B cell (primary cell): ENCODE measurements at regions of chrX and their contacts with region 1.

Region 1: GRCh38 chrX:10111364-10112148 is 45.2 kb upstream of the CLCN4 start:
- DNase-seq: peak; percentile 88
- ATAC-seq: peak; percentile 70
- H3K4me3 ChIP-seq: peak overlapping the region in 4 of 5 experiments; percentile 16 to 43 (median 28)
- H3K4me3 Mint-ChIP-seq: peak overlapping the region; percentile 92
- H3K27ac ChIP-seq: peak overlapping the region; percentile 81 to 98
- H3K27ac Mint-ChIP-seq: peak overlapping the region; percentile 100
- H3K4me1 ChIP-seq: peaks cover 79 to 97% of the 10 kb centered on the region in 2 donors
- H3K4me1 Mint-ChIP-seq: peaks cover 77% of the 10 kb centered on the region
- H3K27me3 ChIP-seq: no peaks in the 10 kb centered on the region
- H3K27me3 Mint-ChIP-seq: no peaks in the 10 kb centered on the region
- CTCF ChIP-seq: no peak

Region 2: GRCh38 chrX:10007621-10008020 is 103.9 kb before region 1 on chrX:
- CTCF ChIA-PET with region 1: interaction called, 18 read pairs
- POLR2A ChIA-PET with region 1: interaction called, 18 read pairs
- intact Hi-C with region 1: no loop called
- DNase-seq: no peak
- ATAC-seq: no peak
- H3K4me3 ChIP-seq: no peak overlapping the region
- H3K4me3 Mint-ChIP-seq: no peak overlapping the region
- H3K27ac ChIP-seq: no peak overlapping the region
- H3K27ac Mint-ChIP-seq: no peak overlapping the region
- H3K4me1 ChIP-seq: peaks cover 21 to 25% of the 10 kb centered on the region in 2 donors
- H3K4me1 Mint-ChIP-seq: peaks cover 30% of the 10 kb centered on the region
- H3K27me3 ChIP-seq: no peaks in the 10 kb centered on the region
- H3K27me3 Mint-ChIP-seq: no peaks in the 10 kb centered on the region
- CTCF ChIP-seq: no peak

Region 3: GRCh38 chrX:10062352-10062751 is 49.2 kb before region 1 on chrX:
- CTCF ChIA-PET with region 1: interaction called, 6 read pairs
- POLR2A ChIA-PET with region 1: no interaction called
- intact Hi-C with region 1: loop called (anchors 5 kb)
- DNase-seq: peak; percentile 15
- ATAC-seq: peak; percentile 51
- H3K4me3 ChIP-seq: no peak overlapping the region
- H3K4me3 Mint-ChIP-seq: peak overlapping the region; percentile 69
- H3K27ac ChIP-seq: no peak overlapping the region
- H3K27ac Mint-ChIP-seq: peak overlapping the region; percentile 80
- H3K4me1 ChIP-seq: peaks cover 6 to 21% of the 10 kb centered on the region in 2 donors
- H3K4me1 Mint-ChIP-seq: peaks cover 47% of the 10 kb centered on the region
- H3K27me3 ChIP-seq: no peaks in the 10 kb centered on the region
- H3K27me3 Mint-ChIP-seq: no peaks in the 10 kb centered on the region
- CTCF ChIP-seq: no peak

Region 4: DNA sequence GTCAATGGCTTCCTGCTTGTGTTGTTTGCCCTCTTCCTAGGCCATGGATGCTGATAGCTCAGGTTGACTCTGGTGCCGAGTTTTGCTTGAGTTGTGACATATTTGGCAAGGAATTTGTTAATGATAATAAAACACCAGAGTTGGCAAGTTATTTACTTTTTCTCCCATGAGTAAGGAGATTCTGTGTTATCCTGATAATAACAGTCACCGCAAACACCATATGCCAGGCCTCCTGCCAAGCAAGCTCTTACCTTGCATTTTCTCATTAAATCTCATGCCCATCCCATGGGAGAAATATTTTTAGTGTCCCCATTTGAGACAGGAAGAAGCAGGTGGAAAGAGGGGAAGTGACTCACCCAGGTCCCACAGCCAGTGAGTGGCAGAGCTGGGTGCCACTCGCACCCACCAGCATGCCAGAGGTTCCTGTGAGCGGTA is 22.2 kb before region 1 on chrX:
- CTCF ChIA-PET with region 1: interaction called, 47 read pairs
- POLR2A ChIA-PET with region 1: interaction called, 13 read pairs
- intact Hi-C with region 1: no loop called
- DNase-seq: no peak
- ATAC-seq: no peak
- H3K4me3 ChIP-seq: no peak overlapping the region
- H3K4me3 Mint-ChIP-seq: no peak overlapping the region
- H3K27ac ChIP-seq: no peak overlapping the region
- H3K27ac Mint-ChIP-seq: peak overlapping the region; percentile 61
- H3K4me1 ChIP-seq: peaks cover 21 to 29% of the 10 kb centered on the region in 2 donors
- H3K4me1 Mint-ChIP-seq: peaks cover 47% of the 10 kb centered on the region
- H3K27me3 ChIP-seq: no peaks in the 10 kb centered on the region
- H3K27me3 Mint-ChIP-seq: no peaks in the 10 kb centered on the region
- CTCF ChIP-seq: no peak

Region 5: DNA sequence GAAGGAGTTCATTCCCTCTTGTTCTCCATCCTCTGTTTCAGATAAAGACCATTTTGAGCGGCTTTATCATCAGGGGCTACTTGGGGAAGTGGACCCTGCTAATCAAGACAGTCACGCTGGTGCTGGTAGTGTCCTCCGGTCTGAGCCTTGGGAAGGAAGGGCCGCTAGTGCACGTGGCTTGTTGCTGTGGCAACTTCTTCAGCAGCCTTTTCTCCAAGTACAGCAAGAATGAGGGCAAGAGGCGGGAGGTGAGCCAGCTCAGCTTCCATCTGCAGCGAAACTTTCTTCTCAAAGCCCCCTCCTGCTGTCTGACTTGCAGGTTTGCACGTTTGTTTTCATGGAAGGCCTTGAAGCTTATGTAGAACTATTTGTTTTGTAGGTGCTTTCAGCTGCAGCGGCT is 94.8 kb after region 1 on chrX:
- CTCF ChIA-PET with region 1: no interaction called
- POLR2A ChIA-PET with region 1: no interaction called
- intact Hi-C with region 1: no loop called
- DNase-seq: no peak
- ATAC-seq: no peak
- H3K4me3 ChIP-seq: no peak overlapping the region
- H3K4me3 Mint-ChIP-seq: no peak overlapping the region
- H3K27ac ChIP-seq: no peak overlapping the region
- H3K27ac Mint-ChIP-seq: no peak overlapping the region
- H3K4me1 ChIP-seq: peaks cover 13 to 14% of the 10 kb centered on the region in 2 donors
- H3K4me1 Mint-ChIP-seq: peaks cover 14% of the 10 kb centered on the region
- H3K27me3 ChIP-seq: no peaks in the 10 kb centered on the region
- H3K27me3 Mint-ChIP-seq: no peaks in the 10 kb centered on the region
- CTCF ChIP-seq: no peak

Region 6: DNA sequence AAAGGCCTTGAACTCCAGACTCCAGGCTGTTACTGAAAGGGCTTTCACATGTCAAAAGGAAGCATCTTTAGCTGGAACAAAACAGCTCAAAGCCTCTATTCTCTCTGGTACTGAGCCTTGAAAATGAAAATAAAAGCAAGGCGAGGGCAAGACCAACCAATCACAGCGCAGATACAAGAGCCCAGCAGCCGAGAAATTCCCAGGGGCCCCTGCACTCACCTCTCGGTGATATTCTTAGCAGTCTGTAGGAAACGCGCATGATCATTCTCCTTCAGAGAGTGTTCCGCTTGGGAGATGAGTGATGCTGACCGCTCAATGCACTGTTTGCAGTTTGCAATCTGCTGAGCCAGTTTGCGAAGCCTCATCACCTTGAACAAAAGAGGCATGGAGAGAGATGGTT is 370.7 kb after region 1 on chrX:
- CTCF ChIA-PET with region 1: no interaction called
- POLR2A ChIA-PET with region 1: no interaction called
- intact Hi-C with region 1: no loop called
- DNase-seq: peak; percentile 65
- ATAC-seq: peak; percentile 92
- H3K4me3 ChIP-seq: peak overlapping the region in 4 of 5 experiments; percentile 7 to 36 (median 32)
- H3K4me3 Mint-ChIP-seq: peak overlapping the region; percentile 73
- H3K27ac ChIP-seq: peak overlapping the region in 1 of 2 donors; percentile 61
- H3K27ac Mint-ChIP-seq: peak overlapping the region; percentile 79
- H3K4me1 ChIP-seq: peaks cover 7 to 8% of the 10 kb centered on the region in 2 donors
- H3K4me1 Mint-ChIP-seq: peaks cover 12% of the 10 kb centered on the region
- H3K27me3 ChIP-seq: no peaks in the 10 kb centered on the region
- H3K27me3 Mint-ChIP-seq: no peaks in the 10 kb centered on the region
- CTCF ChIP-seq: no peak

Region 7: DNA sequence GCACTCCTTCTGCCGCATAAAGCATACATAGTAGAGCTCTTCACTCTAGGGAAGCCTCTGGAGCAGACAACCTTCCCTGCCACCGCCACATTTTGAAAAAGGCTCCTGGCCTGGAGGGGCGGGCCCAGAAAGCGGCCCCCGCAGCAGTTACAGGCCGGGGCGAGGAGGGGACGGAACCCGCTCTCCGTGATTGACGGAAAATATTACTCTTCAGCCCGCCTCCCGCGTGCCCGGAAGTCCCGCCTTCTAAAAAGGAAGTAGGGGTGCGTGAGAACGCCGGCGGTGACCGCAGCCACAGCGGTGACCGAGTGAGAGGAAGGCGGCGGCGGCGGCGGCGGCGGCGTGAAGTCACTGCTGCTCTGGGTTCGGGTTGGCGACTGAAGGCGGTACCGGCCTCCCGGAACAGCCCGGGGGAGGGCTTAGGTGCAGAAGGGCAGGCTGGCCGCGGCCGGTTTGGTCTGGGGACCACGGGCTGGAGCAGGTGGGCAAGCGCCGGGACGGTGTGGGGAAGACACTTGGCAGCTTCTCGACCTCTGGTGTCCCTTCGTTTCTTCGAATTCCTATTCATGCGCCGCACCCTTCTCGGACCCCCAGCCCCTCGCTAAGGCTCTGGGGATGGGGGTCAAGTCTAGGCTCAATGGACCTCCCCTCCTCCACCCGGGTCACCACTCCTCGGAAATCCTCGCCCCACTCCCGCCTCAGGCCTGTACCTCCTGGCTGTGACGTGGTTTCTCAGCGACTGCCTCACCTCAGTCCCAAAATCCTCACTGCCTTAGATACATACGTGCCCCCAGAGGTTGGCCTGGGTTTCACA is 999.7 kb after region 1 on chrX and contains the start of gene HCCS:
- CTCF ChIA-PET with region 1: no interaction called
- POLR2A ChIA-PET with region 1: no interaction called
- intact Hi-C with region 1: loop called (anchors 5 kb)
- DNase-seq: peak; percentile 90
- ATAC-seq: peak; percentile 82
- H3K4me3 ChIP-seq: peak within 1 kb of the TSS; percentile 42 to 84 (median 75)
- H3K4me3 Mint-ChIP-seq: no peak within 1 kb of the TSS
- H3K27ac ChIP-seq: peak within 1 kb of the TSS; percentile 93 to 96
- H3K27ac Mint-ChIP-seq: peak within 1 kb of the TSS; percentile 95
- H3K4me1 ChIP-seq: peaks cover 18 to 34% of the 10 kb centered on the region in 2 donors
- H3K4me1 Mint-ChIP-seq: peaks cover 36% of the 10 kb centered on the region
- H3K27me3 ChIP-seq: no peaks in the 10 kb centered on the region
- H3K27me3 Mint-ChIP-seq: no peaks in the 10 kb centered on the region
- CTCF ChIP-seq: no peak
- total RNA-seq, gene HCCS: 16.7 and 19.1 TPM in 2 replicates